ENCODE measurements at regions of chr11 and their contacts with region 1.

Region 1: DNA sequence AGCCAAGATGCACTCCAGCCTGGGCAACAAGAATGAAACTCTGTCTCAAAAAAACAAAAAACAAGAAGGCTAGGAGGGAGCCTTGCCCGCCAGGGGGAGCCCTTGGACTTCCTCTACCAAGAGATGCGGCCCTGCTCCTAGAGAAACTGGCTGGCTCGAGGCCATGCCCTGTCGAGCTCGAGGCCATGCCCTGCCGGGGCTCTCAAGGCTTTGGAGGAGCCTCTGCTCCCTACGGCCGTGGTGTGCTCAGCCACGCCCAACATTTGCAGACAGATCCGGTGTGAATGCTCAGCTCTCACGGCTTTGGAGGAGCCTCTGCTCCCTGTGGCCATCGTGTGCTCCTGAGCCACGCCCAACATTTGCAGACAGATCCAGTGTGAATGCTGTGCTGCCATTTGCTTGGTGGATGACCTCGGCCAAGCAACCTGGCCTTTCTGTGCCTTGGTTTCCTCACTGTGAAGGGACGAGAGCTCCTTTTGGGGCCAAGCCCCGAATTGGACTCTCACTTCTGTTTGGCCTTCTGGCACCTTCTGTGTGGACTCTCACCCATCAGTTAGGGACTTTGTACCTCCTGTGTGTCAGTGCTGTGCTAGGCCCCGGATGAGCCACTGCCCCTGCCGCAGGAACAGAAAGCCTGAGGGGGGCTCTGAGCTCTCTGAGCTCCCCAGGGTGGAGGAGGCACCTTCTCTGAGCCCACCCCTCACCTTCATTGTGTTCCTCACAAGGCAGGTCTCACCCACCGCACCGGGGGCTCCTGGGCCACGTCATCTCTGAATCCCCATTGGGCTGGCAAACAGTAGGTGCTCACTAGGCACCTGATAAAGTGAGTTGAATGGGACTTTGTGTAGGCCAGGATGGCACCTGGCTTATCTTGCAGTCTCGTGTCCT is 14.1 kb downstream of the C11orf24 start:
- DNase-seq: peak; percentile 94 to 100
- ATAC-seq: peak; percentile 91

Region 2: DNA sequence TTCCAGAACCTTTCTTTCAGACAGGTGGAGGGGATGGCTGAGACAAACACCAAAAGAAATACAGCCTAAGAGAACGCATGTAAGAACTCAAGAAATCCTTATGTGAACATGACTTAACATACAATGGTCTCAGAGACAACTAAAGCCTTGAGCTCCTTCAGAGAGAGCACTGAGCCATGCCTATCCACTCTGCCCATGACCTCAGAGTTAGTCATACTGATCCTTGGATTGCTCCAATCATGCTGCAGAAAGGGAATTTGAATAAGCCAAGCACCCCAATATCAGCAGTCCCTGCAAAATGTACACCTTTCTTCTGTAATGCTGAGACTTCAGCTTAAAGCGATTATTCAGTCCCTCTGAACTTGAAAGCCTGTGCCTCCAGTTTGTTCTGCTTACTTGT is 93.3 kb before region 1 on chr11:
- intact Hi-C with region 1: no loop called
- DNase-seq: no peak
- ATAC-seq: no peak

Region 3: DNA sequence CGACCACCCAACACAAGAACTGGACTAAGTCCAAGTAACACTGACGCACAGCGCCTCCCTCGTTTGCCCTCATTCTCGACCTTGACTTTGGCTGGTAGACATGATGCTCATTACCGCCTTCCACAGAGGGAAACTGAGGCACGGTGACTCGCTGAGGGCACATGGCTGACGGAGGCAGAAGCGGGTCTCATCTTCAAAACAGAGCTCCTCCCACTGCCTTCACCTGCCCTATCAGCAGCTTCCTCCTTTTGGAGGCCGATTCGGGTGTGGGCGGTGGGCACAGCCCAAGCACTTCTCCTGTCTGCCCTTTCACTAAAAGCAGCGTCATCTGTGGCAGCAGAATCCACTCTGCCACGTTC is 42.7 kb before region 1 on chr11:
- intact Hi-C with region 1: no loop called
- DNase-seq: peak in 1 of 2 donors; percentile 31
- ATAC-seq: no peak

Region 4: DNA sequence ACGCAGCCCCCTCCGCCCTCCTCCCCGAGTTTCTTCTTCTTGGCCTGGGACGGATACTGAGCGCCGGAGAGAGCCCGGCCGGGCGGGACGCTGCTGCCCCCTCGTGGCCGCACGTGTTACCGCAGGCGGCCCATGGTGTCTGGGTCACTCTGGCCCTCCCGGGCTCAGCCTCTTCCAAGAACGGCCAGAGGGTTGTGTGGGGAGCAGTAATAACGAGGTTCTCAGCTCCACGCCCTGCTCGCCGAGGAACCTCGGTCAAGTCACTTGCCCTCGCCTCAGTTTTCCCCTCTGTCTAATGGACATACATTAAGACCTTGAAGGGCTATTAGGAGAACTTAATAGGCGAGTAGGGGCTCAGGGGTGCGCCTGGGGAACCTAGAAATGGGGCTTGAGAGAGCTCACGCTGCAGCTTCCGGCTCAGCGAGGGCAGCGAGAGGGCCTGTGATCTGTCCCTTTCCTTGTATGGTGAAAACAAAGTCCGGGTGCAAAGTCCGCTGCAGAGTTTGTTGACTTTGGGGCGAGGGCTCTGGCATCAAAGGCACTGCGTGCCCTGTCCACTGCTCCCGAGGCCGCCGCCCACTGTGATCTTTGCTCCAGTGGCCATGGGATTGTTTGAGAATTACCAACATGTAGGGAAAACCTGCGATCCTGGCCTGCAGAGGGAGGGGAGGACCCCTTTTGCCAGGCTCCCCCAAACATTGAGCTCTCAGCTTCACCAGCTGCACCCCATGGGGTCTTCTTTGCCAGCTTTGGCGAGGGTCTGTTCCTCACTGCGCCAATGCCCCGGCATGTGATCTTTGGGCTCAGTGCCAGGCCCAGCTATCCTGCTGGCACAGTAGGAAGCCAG is 40.3 kb after region 1 on chr11:
- intact Hi-C with region 1: loop called (anchors 2 to 5 kb)
- DNase-seq: peak; percentile 90 to 94
- ATAC-seq: peak; percentile 77

Region 5: GRCh38 chr11:68383976-68384501 is 126.3 kb after region 1 on chr11:
- intact Hi-C with region 1: loop called in 1 of 2 experiments (anchors 5 kb)
- DNase-seq: peak in 1 of 2 donors; percentile 83
- ATAC-seq: no peak

Region 6: GRCh38 chr11:68447015-68447801 is 189.5 kb after region 1 on chr11:
- intact Hi-C with region 1: loop called (anchors 5 to 10 kb)
- DNase-seq: peak; percentile 64 to 83
- ATAC-seq: peak; percentile 90

Region 7: GRCh38 chr11:68763926-68764639 is 506.4 kb after region 1 on chr11:
- intact Hi-C with region 1: no loop called
- DNase-seq: no peak
- ATAC-seq: no peak

Measured in left colon (tissue), 2 donors.